H1 (cell line): ENCODE measurements at regions of chr20 and their contacts with region 1.

Region 1: DNA sequence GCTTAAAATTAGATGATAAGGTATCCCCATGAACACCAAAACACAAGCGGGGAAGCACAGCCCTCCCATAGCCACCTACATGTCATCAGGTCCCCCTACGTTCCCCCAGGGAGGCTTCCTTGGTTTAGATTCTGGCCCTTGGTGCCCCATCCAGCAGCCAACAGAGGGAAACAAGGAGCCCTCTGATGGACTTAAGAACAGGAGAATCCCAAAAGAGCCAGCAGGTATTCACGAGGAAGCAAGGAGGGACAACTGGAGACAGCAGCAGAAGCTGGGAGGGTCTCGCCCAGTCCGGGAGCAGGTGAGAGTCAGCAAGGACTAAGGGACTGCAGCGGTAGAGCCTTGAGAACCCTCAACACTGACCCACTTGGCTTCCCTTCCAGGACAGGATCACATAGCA is 58.4 kb upstream of the TOP1 start:
- DNase-seq: peak in 1 of 2 experiments; percentile 41
- H3K4me3 ChIP-seq: no peak overlapping the region
- H3K27ac ChIP-seq: no peak overlapping the region
- H3K4me1 ChIP-seq: peaks cover 0 to 3% (median under 1%) of the 10 kb centered on the region in 4 experiments; a peak in 3 of 7 replicates
- H3K27me3 ChIP-seq: no peaks in the 10 kb centered on the region
- CTCF ChIP-seq: no peak
- EP300 ChIP-seq: no peak
- POLR2A ChIP-seq: no peak
- RAD21 ChIP-seq: no peak

Region 2: DNA sequence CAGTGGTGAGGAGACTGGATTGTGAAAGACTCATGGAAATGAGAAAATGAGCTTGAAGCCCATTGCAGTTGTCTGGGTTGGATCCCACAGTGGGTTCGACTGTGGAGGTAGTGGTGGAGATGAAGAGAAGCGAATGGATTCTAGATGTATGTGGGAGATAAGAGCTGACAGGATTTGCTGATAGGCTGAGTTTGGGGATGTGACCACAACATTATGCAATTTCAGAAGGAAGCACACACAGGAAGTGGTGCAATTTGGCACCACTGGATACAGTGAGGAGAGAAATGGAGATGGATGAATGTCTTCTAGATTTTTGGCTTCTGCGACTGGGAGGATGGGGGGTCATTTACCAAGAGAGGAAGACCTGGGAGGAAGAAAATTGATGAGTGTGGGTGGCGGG is 216.7 kb before region 1 on chr20:
- CTCF ChIA-PET with region 1: no interaction called
- POLR2A ChIA-PET with region 1: no interaction called
- DNase-seq: no peak
- H3K4me3 ChIP-seq: no peak overlapping the region
- H3K27ac ChIP-seq: no peak overlapping the region
- H3K4me1 ChIP-seq: no peaks in the 10 kb centered on the region; a peak in 1 of 7 replicates
- H3K27me3 ChIP-seq: no peaks in the 10 kb centered on the region
- CTCF ChIP-seq: no peak
- EP300 ChIP-seq: no peak
- POLR2A ChIP-seq: no peak
- RAD21 ChIP-seq: no peak

Region 3: GRCh38 chr20:41017390-41018042 is 47.3 kb after region 1 on chr20:
- CTCF ChIA-PET with region 1: interaction called, 10 read pairs
- POLR2A ChIA-PET with region 1: no interaction called
- DNase-seq: no peak
- H3K4me3 ChIP-seq: no peak overlapping the region
- H3K27ac ChIP-seq: no peak overlapping the region
- H3K4me1 ChIP-seq: 0 out of 7 replicates have a peak, but pooled peaks cover 0 to 2% (median 0%) of the 10 kb centered on the region in 4 experiments
- H3K27me3 ChIP-seq: no peaks in the 10 kb centered on the region
- CTCF ChIP-seq: no peak
- EP300 ChIP-seq: no peak
- POLR2A ChIP-seq: no peak
- RAD21 ChIP-seq: no peak

Region 4: DNA sequence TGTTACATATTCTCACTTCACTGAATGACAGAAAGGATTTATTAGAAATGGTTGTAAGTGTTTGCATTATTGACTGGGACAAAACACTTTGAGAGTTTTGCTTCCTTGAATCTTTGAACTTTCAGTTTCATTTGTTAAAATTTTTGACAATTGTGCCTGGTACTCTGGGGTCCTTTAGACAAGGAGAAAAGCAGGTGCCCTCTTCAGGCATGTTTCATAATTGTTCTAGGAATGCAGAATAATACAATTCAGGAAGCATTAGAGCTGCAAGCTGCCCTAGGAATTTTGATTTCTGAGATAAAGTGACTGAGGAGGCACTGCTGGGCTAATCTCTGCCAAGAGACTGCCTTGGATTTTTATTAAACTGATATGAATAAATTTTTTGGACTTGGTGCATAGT is 108.1 kb after region 1 on chr20:
- CTCF ChIA-PET with region 1: interaction called, 17 read pairs
- POLR2A ChIA-PET with region 1: no interaction called
- DNase-seq: no peak
- H3K4me3 ChIP-seq: no peak overlapping the region
- H3K27ac ChIP-seq: no peak overlapping the region
- H3K4me1 ChIP-seq: no peaks in the 10 kb centered on the region
- H3K27me3 ChIP-seq: no peaks in the 10 kb centered on the region
- CTCF ChIP-seq: peak in 2 of 3 experiments; percentile 17 to 35; a peak in 2 of 4 replicates
- EP300 ChIP-seq: no peak
- POLR2A ChIP-seq: no peak
- RAD21 ChIP-seq: peak; percentile 29 to 42; a peak in 3 of 4 replicates